Activated CD4-positive, alpha-beta T cell treated with anti-CD3 and anti-CD28 coated beads, Interleukin-2, amount 10 ng/mL, durations not matched to agents 7 days and 5 days (primary cell): ENCODE measurements at regions of chr19 and their contacts with region 1.

Region 1: GRCh38 chr19:48842789-48843162 is 6.5 kb upstream of the HSD17B14 start:
- DNase-seq: peak; percentile 67
- H3K4me3 Mint-ChIP-seq: no peak overlapping the region
- H3K27ac Mint-ChIP-seq: peak overlapping the region; percentile 48
- H3K4me1 Mint-ChIP-seq: peaks cover 2% of the 10 kb centered on the region
- H3K27me3 Mint-ChIP-seq: no peaks in the 10 kb centered on the region

Region 2: GRCh38 chr19:48738557-48739399 is 104.0 kb before region 1 on chr19:
- CTCF ChIA-PET with region 1: no interaction called
- POLR2A ChIA-PET with region 1: no interaction called
- DNase-seq: peak; percentile 91
- H3K4me3 Mint-ChIP-seq: peak overlapping the region; percentile 48
- H3K27ac Mint-ChIP-seq: peak overlapping the region; percentile 31
- H3K4me1 Mint-ChIP-seq: peaks cover 34% of the 10 kb centered on the region
- H3K27me3 Mint-ChIP-seq: peaks cover 17% of the 10 kb centered on the region

Region 3: GRCh38 chr19:48784540-48784939 is 58.2 kb before region 1 on chr19:
- CTCF ChIA-PET with region 1: interaction called, 51 read pairs
- POLR2A ChIA-PET with region 1: interaction called, 3 read pairs
- DNase-seq: no peak
- H3K4me3 Mint-ChIP-seq: no peak overlapping the region
- H3K27ac Mint-ChIP-seq: no peak overlapping the region
- H3K4me1 Mint-ChIP-seq: peaks cover 5% of the 10 kb centered on the region
- H3K27me3 Mint-ChIP-seq: peaks cover 2% of the 10 kb centered on the region

Region 4: GRCh38 chr19:48853483-48853882 is 10.7 kb after region 1 on chr19:
- CTCF ChIA-PET with region 1: interaction called, 14 read pairs
- POLR2A ChIA-PET with region 1: no interaction called
- DNase-seq: no peak
- H3K4me3 Mint-ChIP-seq: no peak overlapping the region
- H3K27ac Mint-ChIP-seq: no peak overlapping the region
- H3K4me1 Mint-ChIP-seq: no peaks in the 10 kb centered on the region
- H3K27me3 Mint-ChIP-seq: no peaks in the 10 kb centered on the region

Region 5: DNA sequence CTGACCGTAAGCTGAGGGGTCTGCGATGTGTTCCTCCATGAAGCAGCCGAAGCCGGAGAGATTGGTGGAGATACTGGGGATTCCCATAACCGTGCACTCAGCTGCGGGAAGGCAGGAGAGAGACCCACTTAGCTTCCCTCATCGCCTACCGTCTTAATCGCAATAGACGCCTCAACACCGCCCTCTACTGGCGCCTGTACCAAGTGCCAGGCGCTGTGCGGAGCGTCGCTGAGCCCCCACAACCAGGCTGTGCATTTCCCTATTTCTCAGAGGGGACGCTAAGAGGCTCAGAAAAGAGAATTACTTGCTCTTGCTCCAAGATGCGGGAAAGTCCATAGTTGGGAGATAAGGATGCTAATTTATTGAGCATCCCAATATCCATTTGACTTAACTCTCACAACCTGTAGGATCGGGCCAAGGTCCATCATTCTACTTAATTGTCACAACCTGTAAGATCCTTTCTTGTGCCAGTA is 128.2 kb after region 1 on chr19:
- CTCF ChIA-PET with region 1: interaction called, 10 read pairs
- POLR2A ChIA-PET with region 1: no interaction called
- DNase-seq: peak; percentile 84
- H3K4me3 Mint-ChIP-seq: no peak overlapping the region
- H3K27ac Mint-ChIP-seq: no peak overlapping the region
- H3K4me1 Mint-ChIP-seq: peaks cover 26% of the 10 kb centered on the region
- H3K27me3 Mint-ChIP-seq: no peaks in the 10 kb centered on the region